ENCODE measurements at regions of chr6 and their contacts with region 1.

Region 1: DNA sequence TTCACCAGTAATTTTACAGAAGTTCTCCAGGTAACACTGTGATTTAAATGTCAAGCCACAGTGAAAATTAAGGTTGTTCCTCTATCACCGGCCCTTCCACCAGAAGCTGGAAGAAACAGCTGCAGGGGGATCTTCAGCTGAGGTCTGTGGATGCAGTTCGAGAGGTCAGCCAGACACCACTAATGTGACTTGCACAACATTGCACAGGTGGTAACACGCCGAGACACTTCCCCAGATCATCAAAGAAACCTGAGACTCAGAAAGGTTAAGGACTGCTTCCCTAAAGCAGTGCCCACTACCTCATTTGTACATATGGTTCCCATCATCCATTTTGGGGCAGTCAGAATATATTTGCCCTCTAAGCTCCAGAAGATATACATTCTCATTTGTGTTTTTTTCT is 8.1 kb upstream of the SERPINB9 start:
- DNase-seq: no peak
- ATAC-seq: peak; percentile 35
- H3K4me3 ChIP-seq: no peak overlapping the region
- H3K4me3 Mint-ChIP-seq: no peak overlapping the region
- H3K27ac ChIP-seq: no peak overlapping the region
- H3K27ac Mint-ChIP-seq: peak overlapping the region in 2 of 9 donors; percentile 40 to 54
- H3K4me1 ChIP-seq: peaks cover 0 to 7% of the 10 kb centered on the region in 2 donors
- H3K4me1 Mint-ChIP-seq: peaks cover 26 to 53% (median 40%) of the 10 kb centered on the region in 7 donors
- H3K27me3 ChIP-seq: no peaks in the 10 kb centered on the region
- H3K27me3 Mint-ChIP-seq: peaks cover 0 to 1% (median 0%) of the 10 kb centered on the region in 5 donors

Region 2: DNA sequence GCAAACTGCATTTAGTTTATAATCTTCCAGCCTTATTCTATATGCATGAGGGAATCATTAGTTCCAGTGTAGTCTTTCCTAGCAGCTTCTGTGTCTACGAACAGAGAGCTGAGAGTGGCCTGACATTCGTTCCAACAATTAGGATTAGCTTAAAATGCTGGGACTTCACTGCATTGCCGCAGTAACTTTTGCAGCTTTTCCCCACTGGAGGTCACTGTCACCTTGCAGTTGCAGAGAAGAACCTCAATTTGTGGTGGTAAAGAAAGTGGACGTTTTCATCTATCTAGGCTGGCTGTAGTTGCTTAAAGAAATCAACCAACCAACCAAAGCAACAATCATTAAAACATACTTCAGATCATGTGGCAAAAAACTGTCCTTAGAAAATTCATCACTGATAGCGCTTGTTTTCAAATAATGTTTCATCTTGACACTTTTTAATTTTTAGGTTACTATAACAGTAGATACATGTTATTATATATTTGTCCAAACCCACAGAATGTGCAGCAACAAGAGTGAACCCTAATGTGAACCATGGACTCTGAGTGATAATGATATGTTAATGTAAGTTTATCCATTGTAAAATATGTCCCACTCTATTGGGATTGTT is 172.7 kb before region 1 on chr6:
- CTCF ChIA-PET with region 1: no interaction called
- POLR2A ChIA-PET with region 1: no interaction called
- intact Hi-C with region 1: loop called in 1 of 2 experiments (anchors 2 kb)
- DNase-seq: peak in 8 of 9 donors; percentile 27 to 59 (median 50)
- ATAC-seq: peak; percentile 72
- H3K4me3 ChIP-seq: no peak overlapping the region
- H3K4me3 Mint-ChIP-seq: no peak overlapping the region
- H3K27ac ChIP-seq: no peak overlapping the region
- H3K27ac Mint-ChIP-seq: no peak overlapping the region
- H3K4me1 ChIP-seq: no peaks in the 10 kb centered on the region
- H3K4me1 Mint-ChIP-seq: peaks cover 0 to 5% (median 0%) of the 10 kb centered on the region in 7 donors
- H3K27me3 ChIP-seq: no peaks in the 10 kb centered on the region
- H3K27me3 Mint-ChIP-seq: peaks cover 0 to 21% (median 0%) of the 10 kb centered on the region in 5 donors

Region 3: DNA sequence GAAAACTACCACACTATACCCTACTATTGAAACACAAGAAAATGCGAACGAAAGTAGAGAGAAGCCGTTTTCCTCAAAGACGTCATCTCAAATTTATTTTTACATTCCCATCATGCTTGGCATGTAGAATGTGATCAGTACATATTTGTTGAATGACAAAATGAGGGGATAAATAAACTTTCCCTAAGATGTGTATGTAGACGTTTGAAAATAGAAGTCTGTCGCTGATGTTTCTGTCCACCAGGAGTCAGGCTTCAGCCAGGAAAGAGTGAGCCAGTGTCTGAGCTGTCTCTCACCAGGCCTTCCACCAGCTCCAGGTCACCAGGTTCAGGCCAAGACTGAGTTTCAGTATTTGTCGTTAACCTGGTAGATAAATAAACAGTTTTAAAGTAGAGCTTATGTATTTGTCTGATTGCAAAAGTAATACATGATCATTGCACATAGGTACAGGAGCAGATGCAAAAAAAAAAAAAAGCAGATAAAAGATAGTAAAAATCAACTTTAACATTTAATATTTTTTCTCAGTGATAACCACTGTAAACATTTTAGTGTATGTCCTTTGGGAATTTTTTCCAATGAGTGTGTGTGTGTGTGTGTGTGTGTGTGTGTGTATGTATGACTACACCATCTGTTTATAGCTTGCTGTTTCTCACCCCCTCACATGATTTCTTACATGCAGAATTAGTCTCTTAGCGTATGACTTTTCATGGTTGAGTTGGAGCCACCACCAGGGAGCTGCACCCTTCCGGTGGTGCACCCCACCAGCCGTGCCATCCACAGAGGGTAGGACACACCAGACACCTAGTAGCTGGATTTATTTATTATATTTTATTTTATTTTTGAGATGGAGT is 119.8 kb before region 1 on chr6:
- CTCF ChIA-PET with region 1: interaction called, 7 read pairs
- POLR2A ChIA-PET with region 1: interaction called, 6 read pairs
- intact Hi-C with region 1: loop called (anchors 1 kb)
- DNase-seq: peak in 8 of 9 donors; percentile 10 to 61 (median 53)
- ATAC-seq: peak; percentile 73
- H3K4me3 ChIP-seq: no peak overlapping the region
- H3K4me3 Mint-ChIP-seq: peak overlapping the region in 8 of 10 donors; percentile 12 to 71 (median 56)
- H3K27ac ChIP-seq: no peak overlapping the region
- H3K27ac Mint-ChIP-seq: peak overlapping the region; percentile 29 to 90 (median 81)
- H3K4me1 ChIP-seq: peaks cover 15 to 19% of the 10 kb centered on the region in 2 donors
- H3K4me1 Mint-ChIP-seq: peaks cover 29 to 44% (median 36%) of the 10 kb centered on the region in 7 donors
- H3K27me3 ChIP-seq: no peaks in the 10 kb centered on the region
- H3K27me3 Mint-ChIP-seq: no peaks in the 10 kb centered on the region

Region 4: DNA sequence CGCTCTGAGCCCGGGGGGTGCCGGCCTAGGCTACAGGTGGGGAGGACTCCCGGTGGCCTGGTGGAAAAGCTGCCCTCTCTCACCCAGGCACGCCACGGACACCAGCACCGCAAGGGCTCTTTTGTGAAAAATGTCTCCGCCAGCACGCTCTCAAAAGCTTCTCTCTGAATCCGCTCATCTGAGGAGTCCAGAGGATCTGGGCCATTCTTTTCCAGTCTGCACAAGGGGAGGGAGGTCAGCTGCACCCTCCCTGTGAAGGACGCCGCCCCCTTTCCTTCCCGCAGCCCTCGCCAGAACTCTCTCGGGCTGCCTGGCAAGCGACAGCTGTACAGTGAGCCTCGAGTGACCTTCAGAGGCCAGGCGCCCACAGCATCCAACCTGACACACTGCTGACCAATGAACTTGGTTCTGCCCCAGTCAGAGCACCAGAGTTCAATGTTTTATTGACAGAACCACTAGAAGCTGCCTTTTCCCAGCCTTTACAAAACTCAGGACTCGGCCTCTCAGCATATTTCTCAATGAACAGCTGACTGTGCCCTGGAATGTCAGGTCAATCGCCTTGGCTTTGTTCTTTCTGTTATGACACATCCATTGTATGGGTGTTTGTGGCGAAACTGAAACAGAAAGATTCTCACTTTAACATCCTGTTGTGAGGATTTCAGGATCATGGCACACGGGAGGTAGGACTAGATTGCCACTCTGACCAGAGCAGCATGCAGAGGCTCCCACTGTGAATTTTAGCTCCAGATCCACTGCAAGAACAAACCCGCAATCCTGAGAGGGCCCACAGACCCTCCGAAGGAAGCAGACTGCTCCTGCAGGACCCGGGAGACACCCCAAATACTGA is 34.7 kb before region 1 on chr6:
- CTCF ChIA-PET with region 1: interaction called, 10 read pairs
- POLR2A ChIA-PET with region 1: interaction called, 8 read pairs
- intact Hi-C with region 1: no loop called
- DNase-seq: no peak
- ATAC-seq: peak; percentile 38
- H3K4me3 ChIP-seq: peak overlapping the region; percentile 50
- H3K4me3 Mint-ChIP-seq: peak overlapping the region; percentile 79 to 87 (median 84)
- H3K27ac ChIP-seq: peak overlapping the region; percentile 71
- H3K27ac Mint-ChIP-seq: peak overlapping the region; percentile 82 to 98 (median 91)
- H3K4me1 ChIP-seq: peaks cover 54 to 55% of the 10 kb centered on the region in 2 donors
- H3K4me1 Mint-ChIP-seq: peaks cover 63 to 83% (median 79%) of the 10 kb centered on the region in 7 donors
- H3K27me3 ChIP-seq: no peaks in the 10 kb centered on the region
- H3K27me3 Mint-ChIP-seq: no peaks in the 10 kb centered on the region

Region 5: DNA sequence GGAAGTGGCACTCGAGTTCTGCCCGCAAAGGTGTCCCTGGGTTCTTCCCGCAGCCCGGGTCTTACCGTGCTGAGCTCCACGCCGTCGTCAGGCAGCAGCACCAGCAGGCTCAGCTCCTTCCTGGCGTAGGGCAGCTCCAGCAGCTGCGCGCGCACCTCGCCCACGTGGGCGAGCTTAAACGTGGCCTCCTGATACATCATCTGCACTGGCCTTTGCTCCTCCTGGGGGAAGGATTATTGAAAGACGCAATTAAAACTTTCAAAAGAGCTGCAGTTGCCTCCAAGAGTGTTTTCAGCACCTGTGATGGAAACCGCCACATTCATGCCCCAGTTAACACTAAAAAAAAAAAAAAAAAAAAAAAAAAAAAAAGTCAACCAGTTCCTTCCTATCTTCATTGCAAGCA is 19.4 kb before region 1 on chr6:
- CTCF ChIA-PET with region 1: interaction called, 6 read pairs
- POLR2A ChIA-PET with region 1: interaction called, 7 read pairs
- intact Hi-C with region 1: loop called in 1 of 2 experiments (anchors 2 kb)
- DNase-seq: peak in 8 of 9 donors; percentile 31 to 93 (median 79)
- ATAC-seq: peak; percentile 88
- H3K4me3 ChIP-seq: peak overlapping the region; percentile 34
- H3K4me3 Mint-ChIP-seq: peak overlapping the region; percentile 58 to 81 (median 69)
- H3K27ac ChIP-seq: peak overlapping the region; percentile 69
- H3K27ac Mint-ChIP-seq: peak overlapping the region; percentile 13 to 96 (median 90)
- H3K4me1 ChIP-seq: peaks cover 0 to 18% of the 10 kb centered on the region in 2 donors
- H3K4me1 Mint-ChIP-seq: peaks cover 22 to 80% (median 68%) of the 10 kb centered on the region in 7 donors
- H3K27me3 ChIP-seq: no peaks in the 10 kb centered on the region
- H3K27me3 Mint-ChIP-seq: no peaks in the 10 kb centered on the region

Region 6: GRCh38 chr6:2900821-2901644 is 10.1 kb before region 1 on chr6:
- CTCF ChIA-PET with region 1: interaction called, 10 read pairs
- POLR2A ChIA-PET with region 1: interaction called, 10 read pairs
- intact Hi-C with region 1: no loop called
- DNase-seq: no peak
- ATAC-seq: no peak
- H3K4me3 ChIP-seq: peak overlapping the region; percentile 85
- H3K4me3 Mint-ChIP-seq: peak overlapping the region; percentile 96 to 100 (median 99)
- H3K27ac ChIP-seq: peak overlapping the region; percentile 90
- H3K27ac Mint-ChIP-seq: peak overlapping the region; percentile 88 to 98 (median 97)
- H3K4me1 ChIP-seq: peaks cover 29 to 33% of the 10 kb centered on the region in 2 donors
- H3K4me1 Mint-ChIP-seq: peaks cover 54 to 71% (median 66%) of the 10 kb centered on the region in 7 donors
- H3K27me3 ChIP-seq: no peaks in the 10 kb centered on the region
- H3K27me3 Mint-ChIP-seq: peaks cover 0 to 4% (median 0%) of the 10 kb centered on the region in 5 donors

Region 7: GRCh38 chr6:2931970-2932748 is 21.0 kb after region 1 on chr6:
- CTCF ChIA-PET with region 1: interaction called, 21 read pairs
- POLR2A ChIA-PET with region 1: interaction called, 4 read pairs
- intact Hi-C with region 1: loop called (anchors 1 kb)
- DNase-seq: peak; percentile 61 to 87 (median 82)
- ATAC-seq: peak; percentile 99
- H3K4me3 ChIP-seq: no peak overlapping the region
- H3K4me3 Mint-ChIP-seq: peak overlapping the region in 8 of 10 donors; percentile 28 to 71 (median 44)
- H3K27ac ChIP-seq: no peak overlapping the region
- H3K27ac Mint-ChIP-seq: peak overlapping the region in 8 of 9 donors; percentile 3 to 86 (median 60)
- H3K4me1 ChIP-seq: peaks cover 8 to 20% of the 10 kb centered on the region in 2 donors
- H3K4me1 Mint-ChIP-seq: peaks cover 8 to 42% (median 26%) of the 10 kb centered on the region in 7 donors
- H3K27me3 ChIP-seq: no peaks in the 10 kb centered on the region
- H3K27me3 Mint-ChIP-seq: peaks cover 0 to 10% (median 0%) of the 10 kb centered on the region in 5 donors

Region 8: DNA sequence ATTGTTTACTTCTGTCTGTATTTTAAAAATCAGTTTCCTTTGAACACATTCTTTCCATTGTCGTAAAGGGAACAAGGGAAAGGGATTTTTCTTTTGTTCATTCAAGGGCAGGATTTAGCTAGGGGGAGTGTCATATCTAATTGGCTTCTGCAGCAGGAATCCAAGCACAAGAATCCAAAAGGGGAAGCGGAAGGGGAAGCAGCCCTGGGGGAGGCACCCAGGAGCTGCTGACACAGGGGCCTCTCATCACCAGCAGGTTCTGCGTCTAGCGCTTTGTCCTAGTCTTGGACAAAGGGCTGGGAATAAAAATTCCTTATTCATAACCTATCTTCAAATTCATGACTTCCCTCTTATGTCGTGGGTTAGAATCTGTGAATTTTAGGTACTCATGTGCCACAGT is 170.8 kb after region 1 on chr6:
- CTCF ChIA-PET with region 1: no interaction called
- POLR2A ChIA-PET with region 1: no interaction called
- intact Hi-C with region 1: no loop called
- DNase-seq: no peak
- ATAC-seq: peak; percentile 40
- H3K4me3 ChIP-seq: no peak overlapping the region
- H3K4me3 Mint-ChIP-seq: no peak overlapping the region
- H3K27ac ChIP-seq: no peak overlapping the region
- H3K27ac Mint-ChIP-seq: peak overlapping the region in 3 of 9 donors; percentile 34 to 69 (median 46)
- H3K4me1 ChIP-seq: no peaks in the 10 kb centered on the region
- H3K4me1 Mint-ChIP-seq: peaks cover 10 to 32% (median 20%) of the 10 kb centered on the region in 7 donors
- H3K27me3 ChIP-seq: no peaks in the 10 kb centered on the region
- H3K27me3 Mint-ChIP-seq: no peaks in the 10 kb centered on the region

Measured in naive thymus-derived CD4-positive, alpha-beta T cell (primary cell).